ENCODE measurements at regions of chr17 and their contacts with region 1.

Region 1: GRCh38 chr17:10646392-10646990 is 10.6 kb downstream of the MYH3 start:
- DNase-seq: peak; percentile 71
- H3K4me3 ChIP-seq: peak overlapping the region in 1 of 2 experiments; percentile 21; a peak in 1 of 4 replicates
- H3K27ac ChIP-seq: no peak overlapping the region
- H3K4me1 ChIP-seq: no peaks in the 10 kb centered on the region
- H3K27me3 ChIP-seq: no peaks in the 10 kb centered on the region
- CTCF ChIP-seq: peak; percentile 86
- EP300 ChIP-seq: no peak
- RAD21 ChIP-seq: peak; percentile 84

Region 2: GRCh38 chr17:10631048-10631700 is 15.3 kb before region 1 on chr17:
- CTCF ChIA-PET with region 1: interaction called, 104 read pairs
- POLR2A ChIA-PET with region 1: no interaction called
- DNase-seq: peak; percentile 66
- H3K4me3 ChIP-seq: no peak overlapping the region; a peak in 1 of 4 replicates
- H3K27ac ChIP-seq: no peak overlapping the region
- H3K4me1 ChIP-seq: no peaks in the 10 kb centered on the region
- H3K27me3 ChIP-seq: no peaks in the 10 kb centered on the region; the same call in 1 of the 2 replicates
- CTCF ChIP-seq: peak; percentile 84
- EP300 ChIP-seq: no peak
- RAD21 ChIP-seq: peak; percentile 56

Region 3: DNA sequence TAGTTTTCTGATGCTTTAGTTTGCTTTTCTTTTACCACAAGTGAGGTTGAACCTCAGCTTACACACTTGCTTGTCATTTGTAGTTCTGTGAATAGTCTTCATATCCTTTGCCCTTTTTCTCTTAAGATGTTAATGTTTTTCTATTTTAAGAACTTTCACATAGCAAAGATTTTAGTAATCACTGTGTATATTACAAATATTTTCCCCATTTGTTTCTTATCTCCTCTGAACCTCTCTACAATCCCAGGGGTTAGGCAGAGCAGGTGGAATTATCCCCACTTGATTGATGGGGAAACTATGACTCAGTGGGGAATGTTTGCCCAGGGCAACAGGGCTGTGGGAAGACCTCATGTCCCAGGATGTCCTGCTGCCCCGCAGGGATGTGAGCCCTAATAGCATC is 22.3 kb after region 1 on chr17:
- CTCF ChIA-PET with region 1: interaction called, 11 read pairs
- POLR2A ChIA-PET with region 1: no interaction called
- DNase-seq: no peak
- H3K4me3 ChIP-seq: no peak overlapping the region
- H3K27ac ChIP-seq: peak overlapping the region in 1 of 2 experiments; percentile 32; a peak in 2 of 4 replicates
- H3K4me1 ChIP-seq: no peaks in the 10 kb centered on the region
- H3K27me3 ChIP-seq: no peaks in the 10 kb centered on the region
- CTCF ChIP-seq: no peak
- EP300 ChIP-seq: peak in 1 of 2 experiments; percentile 31; a peak in 1 of 4 replicates
- RAD21 ChIP-seq: no peak

Region 4: DNA sequence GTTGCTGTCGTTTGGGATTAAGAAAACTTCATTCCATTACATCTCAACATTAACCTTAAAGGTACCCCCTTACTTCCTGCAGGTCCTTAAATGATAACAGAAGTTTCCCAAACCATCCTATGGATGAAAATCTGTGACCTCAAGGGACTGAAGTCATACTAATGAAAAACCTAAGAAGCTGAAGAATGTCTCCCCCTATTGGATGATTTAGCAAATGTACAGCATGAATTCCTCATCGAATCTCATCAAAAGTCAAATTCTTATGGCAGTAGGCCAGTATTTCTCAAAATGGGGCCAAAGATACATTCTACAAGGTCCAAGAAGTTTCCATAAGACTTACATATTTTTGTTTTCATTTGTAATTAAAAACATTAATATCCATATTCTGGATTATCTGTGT is 37.4 kb after region 1 on chr17:
- CTCF ChIA-PET with region 1: interaction called, 18 read pairs
- POLR2A ChIA-PET with region 1: no interaction called
- DNase-seq: peak; percentile 46
- H3K4me3 ChIP-seq: peak overlapping the region in 1 of 2 experiments; percentile 43; a peak in 1 of 4 replicates
- H3K27ac ChIP-seq: no peak overlapping the region
- H3K4me1 ChIP-seq: no peaks in the 10 kb centered on the region; a peak in 1 of 4 replicates
- H3K27me3 ChIP-seq: no peaks in the 10 kb centered on the region
- CTCF ChIP-seq: peak; percentile 68
- EP300 ChIP-seq: no peak
- RAD21 ChIP-seq: peak; percentile 28; the same call in 1 of the 2 replicates